Activated CD8-positive, alpha-beta memory T cell treated with anti-CD3 and anti-CD28 coated beads, Interleukin-2, amount 10 ng/mL, durations not matched to agents 7 days and 5 days (primary cell): ENCODE measurements at regions of chr5 and their contacts with region 1.

Region 1: DNA sequence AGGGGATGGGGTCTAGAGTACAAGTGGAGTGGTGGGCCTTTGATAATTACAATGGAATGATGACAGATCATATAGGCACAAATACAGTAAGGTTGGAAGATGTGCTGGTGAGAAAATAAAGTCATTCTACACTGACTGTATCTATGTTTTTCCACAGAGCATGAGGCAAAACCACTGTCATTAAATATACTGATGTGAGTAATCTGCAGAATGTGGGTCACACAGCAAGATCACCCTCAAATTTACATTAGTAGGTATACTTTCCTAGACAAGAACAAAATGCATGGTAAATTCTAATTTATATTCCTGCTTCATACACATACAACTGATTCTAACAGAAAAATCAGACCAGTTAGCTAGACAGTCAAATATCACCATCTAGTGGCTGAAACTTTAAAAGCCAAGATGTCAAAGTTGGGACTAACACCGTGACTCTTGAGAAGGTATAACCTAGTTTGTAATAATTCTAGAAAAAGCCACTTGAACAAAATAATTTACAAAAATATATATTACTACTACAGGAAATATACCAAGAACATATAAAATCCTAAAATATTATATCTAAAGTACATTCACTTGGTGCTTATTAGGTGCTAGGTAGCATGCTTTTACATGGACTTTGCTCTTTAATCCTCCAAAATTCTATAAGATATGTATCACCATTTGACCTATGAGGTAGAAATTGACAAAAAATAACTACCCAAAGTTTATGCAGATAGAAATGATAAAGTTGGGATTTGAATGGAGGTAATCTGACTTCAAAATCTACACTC is 19.5 kb downstream of the TTC33 start:
- DNase-seq: no peak
- ATAC-seq: peak; percentile 75
- H3K4me3 Mint-ChIP-seq: no peak overlapping the region
- H3K27ac Mint-ChIP-seq: no peak overlapping the region
- H3K4me1 Mint-ChIP-seq: peaks cover 27% of the 10 kb centered on the region
- H3K27me3 Mint-ChIP-seq: no peaks in the 10 kb centered on the region

Region 2: GRCh38 chr5:39714036-39714698 is 1022.1 kb before region 1 on chr5:
- CTCF ChIA-PET with region 1: interaction called, 12 read pairs
- DNase-seq: no peak
- ATAC-seq: peak; percentile 42
- H3K4me3 Mint-ChIP-seq: no peak overlapping the region
- H3K27ac Mint-ChIP-seq: no peak overlapping the region
- H3K4me1 Mint-ChIP-seq: no peaks in the 10 kb centered on the region
- H3K27me3 Mint-ChIP-seq: peaks cover 13% of the 10 kb centered on the region